CD14-positive monocyte (primary cell): ENCODE measurements at regions of chr2 and their contacts with region 1.

Region 1: DNA sequence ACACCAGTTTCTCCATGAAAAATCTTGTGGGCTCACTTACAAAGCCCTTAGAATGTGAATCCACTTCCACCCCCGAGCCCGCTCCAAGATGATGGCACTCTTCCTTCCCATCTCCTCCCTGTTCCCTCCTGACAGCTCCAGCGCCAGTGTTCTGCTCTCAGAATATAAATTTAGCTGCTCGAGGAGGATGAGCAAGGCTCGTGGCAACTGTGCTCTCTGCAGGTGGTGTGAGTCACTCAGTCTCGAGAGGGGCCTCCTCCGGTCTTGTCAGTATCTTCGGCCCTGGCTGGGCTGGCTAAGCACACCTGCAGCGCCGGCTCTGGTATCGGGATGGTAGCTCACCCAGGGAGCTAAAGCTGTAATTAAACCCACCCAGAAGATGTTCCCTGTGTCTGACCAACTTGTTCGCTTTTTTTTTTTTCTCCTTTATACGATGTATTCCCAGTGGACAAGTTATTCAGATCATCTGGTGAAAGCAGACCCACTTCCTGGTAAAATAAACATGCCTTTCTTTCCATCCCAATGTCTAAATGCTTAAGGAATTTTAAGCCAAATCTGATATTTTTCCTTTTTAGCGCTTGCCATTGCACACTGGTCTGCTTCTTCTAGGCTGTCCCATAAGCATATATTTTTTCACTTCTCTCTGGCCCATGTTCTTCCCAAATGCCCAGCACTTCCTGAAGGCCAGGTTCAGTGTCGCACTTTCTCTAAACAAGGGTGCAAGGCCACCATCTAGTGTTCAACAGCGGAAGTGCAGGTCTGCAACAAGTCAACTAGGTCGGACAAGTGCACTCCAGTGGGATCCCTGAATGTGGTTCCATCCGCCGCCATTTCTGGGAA is 31.4 kb upstream of the YPEL5 start:
- DNase-seq: peak; percentile 41 to 66 (median 54)
- H3K4me3 ChIP-seq: no peak overlapping the region
- H3K4me3 Mint-ChIP-seq: no peak overlapping the region
- H3K27ac ChIP-seq: no peak overlapping the region
- H3K27ac Mint-ChIP-seq: no peak overlapping the region
- H3K4me1 ChIP-seq: no peaks in the 10 kb centered on the region
- H3K4me1 Mint-ChIP-seq: peaks cover 4% of the 10 kb centered on the region
- H3K27me3 ChIP-seq: no peaks in the 10 kb centered on the region
- H3K27me3 Mint-ChIP-seq: peaks cover 1 to 10% (median 3%) of the 10 kb centered on the region in 3 donors
- CTCF ChIP-seq: peak; percentile 89

Region 2: DNA sequence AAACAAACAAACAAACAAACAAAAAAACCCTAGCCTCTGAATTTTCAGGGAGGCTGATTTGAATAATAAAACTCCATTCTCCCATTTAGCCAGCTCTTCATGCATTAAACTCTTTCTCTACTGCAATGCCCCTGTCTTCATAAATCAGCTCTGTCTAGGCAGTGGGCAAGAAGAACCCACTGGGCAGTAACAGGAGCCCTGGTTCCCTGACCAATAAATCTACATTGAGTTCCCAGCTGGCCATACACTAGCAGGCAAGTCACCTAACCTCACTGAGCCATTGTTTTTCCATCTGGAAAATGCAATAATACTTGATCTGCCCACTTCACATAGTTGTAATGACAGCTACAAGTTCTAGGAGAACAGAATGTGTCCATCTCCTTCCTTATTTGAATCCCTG is 26.2 kb before region 1 on chr2:
- intact Hi-C with region 1: loop called in 1 of 2 experiments (anchors 1 kb)
- DNase-seq: no peak
- H3K4me3 ChIP-seq: no peak overlapping the region
- H3K4me3 Mint-ChIP-seq: no peak overlapping the region
- H3K27ac ChIP-seq: no peak overlapping the region
- H3K27ac Mint-ChIP-seq: no peak overlapping the region
- H3K4me1 ChIP-seq: no peaks in the 10 kb centered on the region
- H3K4me1 Mint-ChIP-seq: no peaks in the 10 kb centered on the region
- H3K27me3 ChIP-seq: peaks cover 3 to 5% of the 10 kb centered on the region in 2 donors
- H3K27me3 Mint-ChIP-seq: peaks cover 8 to 13% (median 12%) of the 10 kb centered on the region in 3 donors
- CTCF ChIP-seq: no peak